ENCODE measurements at regions of chr11 and their contacts with region 1.

Region 1: GRCh38 chr11:94493281-94494125 is at the starts of genes ANKRD49 and MRE11:
- DNase-seq: peak; percentile 98
- H3K4me3 Mint-ChIP-seq: peak within 1 kb of the TSS; percentile 96
- H3K27ac Mint-ChIP-seq: peak within 1 kb of the TSS; percentile 89
- H3K4me1 Mint-ChIP-seq: peaks cover 34% of the 10 kb centered on the region
- H3K27me3 Mint-ChIP-seq: no peaks in the 10 kb centered on the region
- total RNA-seq, gene ANKRD49: 18.6 to 19.2 TPM
- total RNA-seq, gene MRE11: 43.4 to 47.6 TPM

Region 2: GRCh38 chr11:93197380-93198214 is 1295.9 kb before region 1 on chr11 and contains the start of gene SLC36A4:
- CTCF ChIA-PET with region 1: no interaction called
- POLR2A ChIA-PET with region 1: no interaction called
- intact Hi-C with region 1: loop called (anchors 10 kb)
- DNase-seq: peak; percentile 92
- H3K4me3 Mint-ChIP-seq: peak within 1 kb of the TSS; percentile 98
- H3K27ac Mint-ChIP-seq: peak within 1 kb of the TSS; percentile 94
- H3K4me1 Mint-ChIP-seq: peaks cover 23% of the 10 kb centered on the region
- H3K27me3 Mint-ChIP-seq: peaks cover 2% of the 10 kb centered on the region
- total RNA-seq, gene SLC36A4: 13.9 to 14.0 TPM

Region 3: DNA sequence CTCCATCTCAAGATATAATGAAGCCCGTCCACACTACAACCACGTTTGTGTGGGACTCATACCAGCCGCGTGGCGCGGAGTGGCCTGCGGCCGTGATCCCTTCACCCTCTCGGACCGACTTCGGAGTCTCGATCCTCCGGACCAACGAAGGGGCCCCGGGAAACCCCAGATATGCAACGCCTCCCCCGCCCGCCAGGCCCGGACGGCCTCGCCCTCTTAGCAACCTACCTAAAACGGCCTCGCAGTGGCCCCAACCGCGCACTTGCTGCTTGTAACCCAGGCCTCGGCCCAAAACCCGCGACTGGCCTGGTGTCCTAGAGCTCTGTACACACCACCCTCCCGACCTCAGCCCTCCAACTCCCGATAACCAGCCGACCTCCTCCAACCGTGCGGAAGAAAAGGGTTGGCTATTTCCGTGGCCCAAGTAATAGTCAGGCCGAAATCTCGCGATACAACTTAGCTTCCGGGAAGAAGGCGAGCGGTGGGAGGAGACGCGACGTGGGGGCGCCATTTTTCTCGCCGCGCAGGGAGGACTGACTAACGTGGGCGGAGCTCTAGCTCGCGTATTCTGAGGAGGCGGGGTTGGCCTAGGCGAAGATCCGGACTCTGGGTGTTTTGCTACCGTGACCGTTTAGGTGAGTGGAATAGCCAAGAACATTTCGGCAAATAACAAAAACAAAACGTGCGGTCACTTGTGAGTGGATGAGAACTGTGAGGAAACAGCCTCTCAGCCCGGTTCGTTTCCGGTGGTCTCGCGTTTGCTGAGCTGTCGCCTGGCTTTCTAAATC is 752.2 kb before region 1 on chr11 and contains the starts of genes C11orf54 and TAF1D:
- CTCF ChIA-PET with region 1: no interaction called
- POLR2A ChIA-PET with region 1: no interaction called
- intact Hi-C with region 1: loop called (anchors 1 kb)
- DNase-seq: peak; percentile 97
- H3K4me3 Mint-ChIP-seq: peak within 1 kb of the TSS; percentile 100
- H3K27ac Mint-ChIP-seq: peak within 1 kb of the TSS; percentile 100
- H3K4me1 Mint-ChIP-seq: peaks cover 39% of the 10 kb centered on the region
- H3K27me3 Mint-ChIP-seq: no peaks in the 10 kb centered on the region
- total RNA-seq, gene C11orf54: 21.6 to 23.7 TPM
- total RNA-seq, gene TAF1D: 325 to 342 TPM

Region 4: GRCh38 chr11:94128746-94129511 is 364.6 kb before region 1 on chr11 and contains the start of gene PANX1:
- CTCF ChIA-PET with region 1: interaction called, 3 read pairs
- POLR2A ChIA-PET with region 1: no interaction called
- intact Hi-C with region 1: loop called (anchors 2 kb)
- DNase-seq: peak; percentile 82
- H3K4me3 Mint-ChIP-seq: no peak within 1 kb of the TSS
- H3K27ac Mint-ChIP-seq: peak within 1 kb of the TSS; percentile 90
- H3K4me1 Mint-ChIP-seq: peaks cover 28% of the 10 kb centered on the region
- H3K27me3 Mint-ChIP-seq: no peaks in the 10 kb centered on the region
- total RNA-seq, gene PANX1: 11.4 to 11.7 TPM

Region 5: DNA sequence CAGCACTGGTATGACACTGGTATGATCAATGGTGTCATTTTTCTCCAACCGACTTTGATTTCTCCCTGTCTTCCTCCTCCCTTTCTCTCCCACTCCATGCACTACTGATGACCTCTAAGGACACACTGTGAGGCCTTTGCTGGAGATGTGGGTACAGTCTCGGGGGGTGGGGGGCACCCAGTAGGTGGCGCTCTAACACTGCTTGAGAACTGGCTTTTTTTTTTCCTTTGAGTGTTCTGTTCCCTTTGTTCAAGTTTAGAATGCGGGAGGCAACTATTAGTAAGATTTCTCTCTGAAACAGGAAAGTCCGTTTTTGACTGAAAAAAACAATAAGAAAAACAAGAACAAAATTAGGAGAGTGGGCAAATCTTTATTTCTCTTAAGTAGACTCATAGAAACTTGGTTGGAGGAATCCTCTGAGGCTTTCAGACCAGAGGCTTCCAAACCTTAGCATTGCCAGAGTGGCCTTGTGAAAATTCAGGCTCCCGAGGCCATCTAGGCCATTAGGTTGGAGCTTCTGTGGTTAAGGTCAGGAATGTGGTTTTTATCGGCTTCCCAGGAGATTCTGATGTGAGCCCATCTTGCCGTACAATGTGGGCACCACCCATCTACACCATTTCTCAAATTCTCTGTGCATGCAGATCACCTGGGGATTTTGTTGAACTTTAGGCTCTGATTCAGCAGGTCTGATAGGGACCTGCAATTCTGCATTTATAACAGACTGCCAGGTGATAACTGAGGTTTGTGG is 321.6 kb before region 1 on chr11:
- CTCF ChIA-PET with region 1: no interaction called
- POLR2A ChIA-PET with region 1: no interaction called
- intact Hi-C with region 1: no loop called
- DNase-seq: peak; percentile 50
- H3K4me3 Mint-ChIP-seq: no peak overlapping the region
- H3K27ac Mint-ChIP-seq: no peak overlapping the region
- H3K4me1 Mint-ChIP-seq: peaks cover 16% of the 10 kb centered on the region
- H3K27me3 Mint-ChIP-seq: no peaks in the 10 kb centered on the region

Region 6: GRCh38 chr11:94543695-94544645 is 50.5 kb after region 1 on chr11 and contains the start of gene FUT4:
- CTCF ChIA-PET with region 1: no interaction called
- POLR2A ChIA-PET with region 1: no interaction called
- intact Hi-C with region 1: loop called (anchors 1 kb)
- DNase-seq: peak; percentile 83
- H3K4me3 Mint-ChIP-seq: peak within 1 kb of the TSS; percentile 99
- H3K27ac Mint-ChIP-seq: peak within 1 kb of the TSS; percentile 98
- H3K4me1 Mint-ChIP-seq: peaks cover 35% of the 10 kb centered on the region
- H3K27me3 Mint-ChIP-seq: peaks cover 2% of the 10 kb centered on the region
- total RNA-seq, gene FUT4: 3.6 to 3.9 TPM

Region 7: GRCh38 chr11:94563176-94563847 is 69.8 kb after region 1 on chr11:
- CTCF ChIA-PET with region 1: no interaction called
- POLR2A ChIA-PET with region 1: no interaction called
- intact Hi-C with region 1: no loop called
- DNase-seq: no peak
- H3K4me3 Mint-ChIP-seq: no peak overlapping the region
- H3K27ac Mint-ChIP-seq: no peak overlapping the region
- H3K4me1 Mint-ChIP-seq: no peaks in the 10 kb centered on the region
- H3K27me3 Mint-ChIP-seq: no peaks in the 10 kb centered on the region